HEK293 (cell line): ENCODE measurements at regions of chr9 and their contacts with region 1.

Region 1: GRCh38 chr9:113591001-113591898 is 127.7 kb downstream of the RGS3 start:
- H3K4me3 ChIP-seq: no peak overlapping the region
- H3K27ac ChIP-seq: no peak overlapping the region
- H3K4me1 ChIP-seq: no peaks in the 10 kb centered on the region
- CTCF ChIP-seq: peak; percentile 63

Region 2: GRCh38 chr9:113446323-113446740 is 144.9 kb before region 1 on chr9:
- CTCF ChIA-PET with region 1: interaction called, 201 read pairs
- POLR2A ChIA-PET with region 1: no interaction called
- H3K4me3 ChIP-seq: no peak overlapping the region
- H3K27ac ChIP-seq: no peak overlapping the region
- H3K4me1 ChIP-seq: no peaks in the 10 kb centered on the region
- CTCF ChIP-seq: no peak

Region 3: DNA sequence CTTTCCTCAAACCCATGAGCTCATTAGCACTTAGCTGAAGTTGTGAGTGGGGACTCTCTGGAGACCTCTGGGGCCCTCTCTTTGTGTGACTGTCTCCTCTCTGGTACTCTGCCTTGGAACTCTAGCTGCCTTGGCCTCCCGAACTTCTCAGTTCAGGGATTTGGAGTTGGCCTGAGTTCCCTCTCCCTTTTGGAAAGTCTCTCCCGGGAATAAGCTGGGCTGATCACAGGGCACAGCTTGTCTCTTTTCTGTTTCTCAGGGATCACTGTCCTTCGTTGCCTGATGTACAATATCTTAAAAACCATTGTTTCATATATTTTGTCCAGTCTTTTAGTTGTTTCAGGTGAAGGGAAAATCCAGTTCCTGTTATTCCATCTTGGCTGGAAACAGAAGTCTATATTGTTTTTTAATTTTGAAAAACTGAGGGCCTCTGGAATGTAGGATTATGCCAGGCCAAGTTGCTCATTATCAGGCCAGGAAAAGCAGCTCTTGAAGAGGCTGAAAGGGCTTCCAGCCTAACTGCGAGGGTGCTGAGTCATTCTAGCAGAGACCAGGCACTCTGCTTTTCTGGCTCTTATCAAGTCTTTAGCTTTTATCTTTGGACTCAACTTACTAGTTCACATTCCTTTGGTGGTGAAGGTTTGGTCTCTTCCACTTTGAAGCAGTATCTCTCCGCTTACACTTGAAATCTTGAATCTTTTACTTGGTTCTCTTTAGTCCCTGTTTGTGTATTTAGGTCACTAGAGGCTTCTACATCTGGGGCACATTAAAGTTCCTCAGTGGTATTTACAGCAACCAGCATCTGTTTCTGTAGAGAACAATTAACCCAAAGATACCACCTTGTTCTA is 136.1 kb before region 1 on chr9:
- CTCF ChIA-PET with region 1: interaction called, 15 read pairs
- POLR2A ChIA-PET with region 1: no interaction called
- H3K4me3 ChIP-seq: no peak overlapping the region
- H3K27ac ChIP-seq: no peak overlapping the region
- H3K4me1 ChIP-seq: peaks cover 3% of the 10 kb centered on the region; the same call in 1 of the 2 replicates
- CTCF ChIP-seq: no peak

Region 4: DNA sequence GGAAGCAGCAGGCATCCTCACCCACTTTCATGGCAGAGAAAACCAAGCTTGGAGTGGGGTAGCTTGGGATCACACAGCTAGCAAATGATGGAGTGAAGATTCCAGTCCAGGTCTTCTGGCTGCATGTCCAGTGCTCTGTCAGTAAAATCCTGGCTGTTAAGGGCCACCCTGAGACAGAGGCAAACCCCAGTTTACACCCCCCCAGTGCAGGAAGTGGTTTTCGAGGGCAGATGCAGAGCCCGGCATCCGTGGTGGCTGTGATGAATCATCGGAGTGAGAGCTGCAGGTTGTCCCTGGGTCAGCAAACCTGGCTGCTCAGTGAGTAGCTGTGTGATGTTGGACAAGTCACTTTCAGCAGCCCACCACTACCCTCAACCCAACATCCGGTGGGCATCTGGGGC is 12.4 kb before region 1 on chr9:
- CTCF ChIA-PET with region 1: interaction called, 25 read pairs
- POLR2A ChIA-PET with region 1: no interaction called
- H3K4me3 ChIP-seq: no peak overlapping the region
- H3K27ac ChIP-seq: no peak overlapping the region
- H3K4me1 ChIP-seq: no peaks in the 10 kb centered on the region
- CTCF ChIP-seq: no peak

Region 5: DNA sequence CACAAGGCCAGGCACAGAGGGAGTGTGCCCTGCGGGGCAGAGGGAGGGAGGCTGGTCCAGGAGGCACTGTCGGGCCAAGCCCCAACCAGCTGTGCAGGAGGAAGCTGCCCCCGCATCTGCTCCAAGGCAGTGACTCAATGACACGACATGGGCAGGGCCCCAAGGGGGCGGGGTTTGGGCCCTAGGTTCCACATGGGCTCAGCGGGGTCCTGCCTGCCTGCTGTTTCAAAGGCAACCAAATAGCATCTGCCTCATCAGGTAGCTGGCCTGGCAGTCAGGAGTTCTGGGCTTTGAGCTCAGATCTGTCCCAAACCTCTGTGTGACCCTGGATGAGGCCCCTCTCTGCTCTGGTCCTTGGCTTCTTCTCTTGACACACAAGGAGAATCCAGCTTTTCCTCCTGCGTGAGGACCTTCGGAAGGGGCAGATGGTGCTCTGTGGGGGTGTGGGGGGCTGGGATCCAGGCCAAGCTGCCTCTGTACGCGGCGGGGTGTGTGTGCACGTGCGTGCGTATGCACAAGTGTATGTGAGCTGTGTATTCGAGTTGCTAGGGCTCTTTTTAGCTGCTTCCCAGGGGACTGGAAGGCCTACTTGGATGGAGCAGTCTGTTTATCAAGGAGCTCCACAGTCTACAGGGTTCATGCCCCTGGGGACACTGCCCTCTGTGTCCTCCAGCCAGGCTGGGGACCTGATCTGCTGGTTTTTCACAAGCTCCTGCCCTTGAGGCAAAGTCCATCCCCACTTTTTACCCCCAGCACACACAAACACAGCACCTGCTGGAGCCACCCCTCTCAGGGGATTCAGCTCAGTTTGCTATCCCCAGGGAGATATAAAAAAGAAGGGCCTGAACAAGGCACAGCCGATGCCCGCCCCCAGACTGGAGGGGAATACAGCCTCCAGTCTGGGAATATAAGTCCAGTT is 11.1 kb after region 1 on chr9:
- CTCF ChIA-PET with region 1: interaction called, 50 read pairs
- POLR2A ChIA-PET with region 1: interaction called, 4 read pairs
- H3K4me3 ChIP-seq: no peak overlapping the region
- H3K27ac ChIP-seq: no peak overlapping the region
- H3K4me1 ChIP-seq: peaks cover 6% of the 10 kb centered on the region
- CTCF ChIP-seq: no peak

Region 6: GRCh38 chr9:113622600-113623400 is 31.6 kb after region 1 on chr9:
- CTCF ChIA-PET with region 1: interaction called, 33 read pairs
- POLR2A ChIA-PET with region 1: no interaction called
- H3K4me3 ChIP-seq: no peak overlapping the region
- H3K27ac ChIP-seq: no peak overlapping the region; the same call in 1 of the 2 replicates
- H3K4me1 ChIP-seq: peaks cover 7% of the 10 kb centered on the region; the same call in 1 of the 2 replicates
- CTCF ChIP-seq: no peak

Region 7: GRCh38 chr9:113668061-113668460 is 76.8 kb after region 1 on chr9:
- CTCF ChIA-PET with region 1: interaction called, 10 read pairs
- POLR2A ChIA-PET with region 1: no interaction called
- H3K4me3 ChIP-seq: no peak overlapping the region
- H3K27ac ChIP-seq: no peak overlapping the region
- H3K4me1 ChIP-seq: no peaks in the 10 kb centered on the region
- CTCF ChIP-seq: no peak

Region 8: GRCh38 chr9:113705928-113706519 is 114.8 kb after region 1 on chr9:
- CTCF ChIA-PET with region 1: no interaction called
- POLR2A ChIA-PET with region 1: no interaction called
- H3K4me3 ChIP-seq: no peak overlapping the region
- H3K27ac ChIP-seq: no peak overlapping the region
- H3K4me1 ChIP-seq: no peaks in the 10 kb centered on the region
- CTCF ChIP-seq: no peak